Right ventricle myocardium inferior (tissue), 1 donor: ENCODE measurements at regions of chr2 and their contacts with region 1.

Region 1: GRCh38 chr2:27191053-27191829 is 20.6 kb upstream of the ATRAID start:
- DNase-seq: no peak
- ATAC-seq: peak; percentile 64

Region 2: GRCh38 chr2:26964446-26965130 is 226.7 kb before region 1 on chr2:
- intact Hi-C with region 1: loop called (anchors 5 kb)
- DNase-seq: no peak
- ATAC-seq: no peak